HCT116 (cell line): ENCODE measurements at regions of chr3 and their contacts with region 1.

Region 1: DNA sequence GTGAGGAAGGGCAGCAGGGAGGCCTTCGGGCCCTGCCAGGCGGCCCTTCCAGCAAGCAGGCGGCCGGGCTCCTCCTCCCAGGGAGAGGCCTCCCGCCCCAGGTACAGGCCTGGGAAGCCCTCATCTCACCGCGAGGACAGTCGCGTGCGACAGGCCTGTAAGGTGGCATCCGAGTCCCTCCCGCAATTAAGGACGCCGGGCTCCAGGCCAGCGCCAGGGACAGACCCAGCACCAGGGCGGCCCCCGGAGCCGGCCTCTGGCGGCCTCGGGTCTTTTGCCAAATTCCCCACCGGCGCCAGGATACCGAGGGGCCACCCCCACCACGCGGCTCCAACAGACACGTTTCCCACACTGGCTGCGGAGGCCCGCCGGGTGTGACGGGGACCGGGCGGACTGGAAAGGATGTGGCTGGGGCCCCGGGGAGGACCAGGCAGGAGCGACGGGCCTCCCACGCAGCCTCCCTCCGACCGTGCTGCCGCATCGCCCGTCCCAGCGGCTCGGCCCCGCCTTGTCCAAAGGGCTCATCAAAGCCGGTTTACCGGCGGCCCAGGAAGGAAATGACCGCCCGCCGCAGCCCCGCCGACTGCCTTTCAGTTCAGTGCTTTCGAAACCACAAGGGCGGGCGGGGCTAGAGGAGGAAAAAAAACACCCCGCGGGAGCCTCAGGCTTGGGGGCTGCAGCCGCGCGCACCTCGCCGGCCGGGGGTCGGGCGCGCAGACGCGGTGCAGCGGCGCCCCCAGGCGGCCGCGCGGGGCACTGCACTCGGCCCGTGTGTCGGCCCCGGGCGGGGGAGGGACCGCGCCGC is 11.3 kb downstream of the XXYLT1 start:
- DNase-seq: peak; percentile 63
- ATAC-seq: peak; percentile 76
- H3K4me3 ChIP-seq: peak overlapping the region; percentile 51 to 66
- H3K27ac ChIP-seq: peak overlapping the region; percentile 92
- H3K4me1 ChIP-seq: peaks cover 19 to 28% of the 10 kb centered on the region in 2 experiments
- H3K27me3 ChIP-seq: no peaks in the 10 kb centered on the region
- CTCF ChIP-seq: peak in 2 of 3 experiments; percentile 28 to 37; a peak in 4 of 6 replicates
- POLR2A ChIP-seq: no peak
- RAD21 ChIP-seq: peak; percentile 51

Region 2: DNA sequence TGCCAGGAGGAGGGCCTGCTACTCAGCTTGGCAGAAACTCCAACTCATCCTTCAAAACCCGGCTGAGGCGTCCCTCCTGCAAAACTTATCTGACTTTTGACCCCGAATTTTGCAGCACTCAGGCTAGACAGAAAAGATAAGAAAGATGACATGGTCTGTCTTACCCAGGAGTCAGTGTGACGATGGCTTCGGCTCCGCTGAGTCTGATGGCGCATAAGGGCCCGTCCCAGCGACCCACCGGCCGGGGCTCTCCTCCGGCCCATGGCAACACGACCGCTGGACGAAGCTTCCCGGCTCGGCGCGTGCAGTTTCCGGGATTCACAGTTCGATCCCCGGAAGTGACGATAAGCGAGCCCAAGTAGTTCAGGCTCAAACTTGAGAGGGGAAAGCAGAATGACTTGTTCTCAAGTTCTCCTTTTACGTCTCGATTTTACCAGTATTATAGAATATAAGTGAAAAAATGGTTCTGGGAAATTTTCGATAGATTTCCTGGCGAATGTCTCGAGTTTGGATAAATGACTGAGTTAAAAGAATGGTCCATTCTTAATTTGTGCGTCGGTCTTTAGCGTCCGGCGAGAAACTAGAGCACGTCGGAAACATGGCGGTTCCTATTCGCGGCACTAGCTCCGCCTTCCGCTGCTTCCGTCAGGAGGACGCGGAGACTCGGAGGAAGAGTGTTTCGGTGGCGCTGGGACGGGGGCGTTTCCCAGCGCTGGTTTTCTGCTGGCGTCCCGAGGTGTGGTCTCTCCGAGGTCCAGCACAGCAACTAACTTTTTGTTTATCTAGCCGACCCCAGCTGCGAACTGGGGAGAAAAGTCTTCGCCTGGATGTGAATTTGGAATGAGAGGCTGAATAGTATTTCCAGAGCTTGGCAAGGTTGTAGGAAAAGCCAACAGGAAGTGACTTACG is 587.5 kb before region 1 on chr3 and contains the start of gene LSG1:
- CTCF ChIA-PET with region 1: interaction called, 9 read pairs
- POLR2A ChIA-PET with region 1: no interaction called
- RAD21 ChIA-PET with region 1: no interaction called
- intact Hi-C with region 1: loop called (anchors 1 kb)
- DNase-seq: peak; percentile 95
- ATAC-seq: peak; percentile 93
- H3K4me3 ChIP-seq: peak within 1 kb of the TSS; percentile 89 to 95
- H3K27ac ChIP-seq: peak within 1 kb of the TSS; percentile 43
- H3K4me1 ChIP-seq: peaks cover 7 to 19% of the 10 kb centered on the region in 2 experiments; a peak in 3 of 4 replicates
- H3K27me3 ChIP-seq: no peaks in the 10 kb centered on the region; the same call in 1 of the 2 replicates
- CTCF ChIP-seq: no peak
- POLR2A ChIP-seq: peak; percentile 26
- RAD21 ChIP-seq: no peak
- total RNA-seq, gene LSG1: 39.7 TPM

Region 3: DNA sequence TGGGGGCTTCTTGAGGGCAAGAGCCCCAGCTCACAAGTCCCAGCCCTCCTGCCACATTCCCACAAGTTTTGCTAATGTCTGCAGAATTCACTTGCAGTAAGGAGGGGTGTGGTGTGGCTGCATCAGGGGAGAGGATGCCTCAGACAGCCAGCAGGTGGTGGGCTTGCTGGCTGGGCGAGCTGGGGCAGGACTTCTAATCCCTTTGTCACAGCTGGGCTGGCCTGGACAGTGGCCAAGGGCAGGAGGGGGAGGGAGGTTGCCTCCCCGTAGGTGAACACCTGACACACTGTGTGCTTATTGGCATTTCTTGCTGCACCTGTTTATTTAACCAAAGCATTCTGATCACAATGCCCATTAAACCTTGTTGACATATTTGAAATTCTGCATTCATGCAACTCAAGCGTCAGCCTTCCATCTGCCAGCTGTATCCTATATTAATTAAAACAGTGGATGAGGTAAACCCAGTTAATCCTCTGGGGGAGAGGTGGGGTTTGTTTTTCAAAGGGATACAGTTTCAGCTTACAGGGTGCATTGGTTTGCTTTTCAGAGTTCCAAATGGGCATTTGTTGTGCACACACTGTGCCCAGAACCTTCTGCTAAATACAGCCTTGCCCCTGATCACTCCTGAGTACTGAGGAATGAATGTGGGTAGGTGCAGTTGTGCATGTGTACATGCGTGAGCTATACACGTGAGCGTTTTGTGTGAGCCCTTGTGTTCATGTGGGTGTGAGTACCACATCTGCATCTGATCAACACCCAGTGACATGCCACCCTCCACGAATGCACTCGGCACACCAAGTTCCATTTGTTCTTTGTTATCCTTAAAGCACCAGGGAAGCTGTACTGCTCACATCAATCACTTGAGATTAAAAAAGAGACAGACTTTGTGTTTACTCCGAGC is 257.5 kb before region 1 on chr3:
- CTCF ChIA-PET with region 1: no interaction called
- POLR2A ChIA-PET with region 1: no interaction called
- RAD21 ChIA-PET with region 1: no interaction called
- intact Hi-C with region 1: loop called (anchors 2 kb)
- DNase-seq: peak; percentile 37
- ATAC-seq: peak; percentile 93
- H3K4me3 ChIP-seq: no peak overlapping the region
- H3K27ac ChIP-seq: no peak overlapping the region
- H3K4me1 ChIP-seq: peaks cover 0 to 9% of the 10 kb centered on the region in 2 experiments; a peak in 1 of 4 replicates
- H3K27me3 ChIP-seq: peaks cover 34% of the 10 kb centered on the region; the same call in 1 of the 2 replicates
- CTCF ChIP-seq: peak; percentile 68 to 76 (median 71); a peak in 5 of 6 replicates
- POLR2A ChIP-seq: no peak
- RAD21 ChIP-seq: peak; percentile 84

Region 4: GRCh38 chr3:195117978-195118581 is 141.6 kb before region 1 on chr3:
- CTCF ChIA-PET with region 1: no interaction called
- POLR2A ChIA-PET with region 1: no interaction called
- RAD21 ChIA-PET with region 1: no interaction called
- intact Hi-C with region 1: loop called (anchors 2 kb)
- DNase-seq: peak; percentile 77
- ATAC-seq: peak; percentile 80
- H3K4me3 ChIP-seq: peak overlapping the region; percentile 20 to 47
- H3K27ac ChIP-seq: peak overlapping the region; percentile 57
- H3K4me1 ChIP-seq: peaks cover 30 to 44% of the 10 kb centered on the region in 2 experiments
- H3K27me3 ChIP-seq: no peaks in the 10 kb centered on the region
- CTCF ChIP-seq: peak in 2 of 3 experiments; percentile 54 to 58; a peak in 4 of 6 replicates
- POLR2A ChIP-seq: no peak
- RAD21 ChIP-seq: peak; percentile 7; the same call in 1 of the 2 replicates

Region 5: DNA sequence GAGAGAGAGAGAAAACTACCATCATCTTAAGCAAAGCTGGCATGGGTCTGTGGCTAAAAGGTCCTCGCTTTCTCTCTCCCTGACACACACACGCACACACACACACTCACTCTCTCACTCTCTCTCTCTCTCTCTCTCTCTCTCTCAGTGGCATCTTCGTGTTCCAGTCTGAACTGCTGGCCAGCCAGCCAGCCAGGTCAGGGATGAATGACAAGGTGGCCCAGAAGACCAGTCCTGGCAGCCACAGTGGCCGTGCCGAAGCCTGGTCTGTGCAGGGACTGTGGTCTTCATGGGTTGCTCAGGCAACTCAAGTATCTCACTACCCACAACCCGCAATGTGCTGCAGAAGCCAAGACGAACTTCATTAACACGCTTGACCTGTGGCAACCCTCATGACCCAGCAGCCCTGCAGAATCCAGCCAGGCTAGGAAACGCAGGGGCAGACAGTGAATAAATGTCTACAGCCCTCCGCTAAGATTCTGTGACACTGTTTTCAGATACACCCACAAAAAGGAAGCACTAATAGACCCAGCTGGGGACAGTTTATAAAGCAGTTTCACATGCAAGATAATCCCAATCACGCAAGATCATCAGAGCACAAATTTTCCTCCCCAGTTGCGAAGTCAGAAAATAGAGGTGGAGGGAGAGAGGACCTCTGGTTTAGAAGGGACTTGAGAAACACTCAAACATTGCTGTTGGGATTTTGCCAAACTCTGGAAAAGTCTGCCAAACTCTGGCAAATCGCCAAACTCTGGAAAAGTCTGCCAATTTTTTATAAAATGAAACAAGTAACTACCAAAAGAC is 55.1 kb before region 1 on chr3:
- CTCF ChIA-PET with region 1: no interaction called
- POLR2A ChIA-PET with region 1: no interaction called
- RAD21 ChIA-PET with region 1: no interaction called
- intact Hi-C with region 1: no loop called
- DNase-seq: no peak
- ATAC-seq: peak; percentile 22; the same call in 1 of the 2 replicates
- H3K4me3 ChIP-seq: no peak overlapping the region
- H3K27ac ChIP-seq: no peak overlapping the region
- H3K4me1 ChIP-seq: peaks cover 7 to 26% of the 10 kb centered on the region in 2 experiments; a peak in 3 of 4 replicates
- H3K27me3 ChIP-seq: no peaks in the 10 kb centered on the region
- CTCF ChIP-seq: no peak
- POLR2A ChIP-seq: no peak
- RAD21 ChIP-seq: no peak